MCF 10A (cell line): ENCODE measurements at regions of chr19 and their contacts with region 1.

Region 1: GRCh38 chr19:41449079-41449864 is 6.3 kb downstream of the ERICH4 start:
- DNase-seq: peak; percentile 68
- H3K4me3 Mint-ChIP-seq: peak overlapping the region; percentile 35
- H3K27ac Mint-ChIP-seq: no peak overlapping the region
- H3K4me1 Mint-ChIP-seq: no peaks in the 10 kb centered on the region
- H3K27me3 Mint-ChIP-seq: peaks cover 44% of the 10 kb centered on the region
- CTCF ChIP-seq: peak; percentile 94

Region 2: GRCh38 chr19:40974633-40975037 is 474.6 kb before region 1 on chr19:
- CTCF ChIA-PET with region 1: no interaction called
- POLR2A ChIA-PET with region 1: no interaction called
- intact Hi-C with region 1: no loop called
- DNase-seq: peak; percentile 78
- H3K4me3 Mint-ChIP-seq: no peak overlapping the region
- H3K27ac Mint-ChIP-seq: no peak overlapping the region
- H3K4me1 Mint-ChIP-seq: no peaks in the 10 kb centered on the region
- H3K27me3 Mint-ChIP-seq: peaks cover 74% of the 10 kb centered on the region
- CTCF ChIP-seq: peak; percentile 84

Region 3: GRCh38 chr19:41537789-41538188 is 88.5 kb after region 1 on chr19:
- CTCF ChIA-PET with region 1: interaction called, 6 read pairs
- POLR2A ChIA-PET with region 1: no interaction called
- intact Hi-C with region 1: loop called (anchors 1 kb)
- DNase-seq: peak; percentile 49
- H3K4me3 Mint-ChIP-seq: no peak overlapping the region
- H3K27ac Mint-ChIP-seq: no peak overlapping the region
- H3K4me1 Mint-ChIP-seq: no peaks in the 10 kb centered on the region
- H3K27me3 Mint-ChIP-seq: peaks cover 47% of the 10 kb centered on the region
- CTCF ChIP-seq: peak; percentile 47

Region 4: DNA sequence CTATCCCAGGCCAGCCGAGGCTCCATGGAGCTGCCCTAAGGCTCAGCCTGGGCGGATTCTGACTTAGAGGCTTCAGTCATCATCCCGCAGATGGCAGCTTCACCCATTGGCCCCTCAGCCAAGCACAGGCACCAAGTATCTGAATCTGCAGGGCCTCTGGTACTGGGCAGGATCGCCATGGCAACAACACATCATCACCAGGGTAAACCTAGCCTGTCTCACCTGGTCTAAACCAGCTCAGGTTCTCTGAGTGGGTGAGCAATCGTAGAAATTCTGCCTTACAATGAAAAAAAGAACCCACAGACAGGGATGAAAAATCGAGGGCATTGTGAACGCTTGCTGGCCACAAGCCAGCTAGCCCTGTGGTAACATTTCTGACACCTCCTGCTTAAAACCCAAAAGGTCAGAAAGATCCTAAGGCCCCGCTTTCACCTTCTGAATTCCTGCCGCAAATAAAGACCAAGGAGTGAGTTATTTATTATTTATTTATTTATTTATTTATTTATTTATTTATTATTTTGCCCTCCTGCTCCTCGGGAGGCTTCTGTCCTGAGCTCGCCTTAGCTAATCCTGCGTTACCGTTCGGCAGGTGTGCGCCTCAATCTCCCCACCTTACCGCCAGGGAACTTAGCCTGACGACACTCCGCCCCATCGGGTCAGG is 114.7 kb after region 1 on chr19:
- CTCF ChIA-PET with region 1: interaction called, 315 read pairs
- POLR2A ChIA-PET with region 1: no interaction called
- intact Hi-C with region 1: loop called (anchors 1 kb)
- DNase-seq: peak; percentile 12
- H3K4me3 Mint-ChIP-seq: no peak overlapping the region
- H3K27ac Mint-ChIP-seq: no peak overlapping the region
- H3K4me1 Mint-ChIP-seq: no peaks in the 10 kb centered on the region
- H3K27me3 Mint-ChIP-seq: peaks cover 90% of the 10 kb centered on the region
- CTCF ChIP-seq: no peak

Region 5: GRCh38 chr19:41597600-41598041 is 148.3 kb after region 1 on chr19:
- CTCF ChIA-PET with region 1: interaction called, 29 read pairs
- POLR2A ChIA-PET with region 1: no interaction called
- intact Hi-C with region 1: loop called (anchors 1 kb)
- DNase-seq: peak; percentile 68
- H3K4me3 Mint-ChIP-seq: no peak overlapping the region
- H3K27ac Mint-ChIP-seq: no peak overlapping the region
- H3K4me1 Mint-ChIP-seq: peaks cover 6% of the 10 kb centered on the region
- H3K27me3 Mint-ChIP-seq: peaks cover 85% of the 10 kb centered on the region
- CTCF ChIP-seq: peak; percentile 86